Gastrocnemius medialis (tissue), 4 donors: ENCODE measurements at regions of chr2 and their contacts with region 1.

Region 1: GRCh38 chr2:26605195-26605998 is 35.8 kb downstream of the CIB4 start:
- DNase-seq: no peak
- ATAC-seq: peak; percentile 77 to 82
- H3K4me3 ChIP-seq: no peak overlapping the region
- H3K27ac ChIP-seq: no peak overlapping the region
- H3K4me1 ChIP-seq: no peaks in the 10 kb centered on the region
- H3K27me3 ChIP-seq: peaks cover 0 to 11% (median 11%) of the 10 kb centered on the region in 3 donors
- CTCF ChIP-seq: peak; percentile 76 to 86 (median 81)
- POLR2A ChIP-seq: no peak

Region 2: DNA sequence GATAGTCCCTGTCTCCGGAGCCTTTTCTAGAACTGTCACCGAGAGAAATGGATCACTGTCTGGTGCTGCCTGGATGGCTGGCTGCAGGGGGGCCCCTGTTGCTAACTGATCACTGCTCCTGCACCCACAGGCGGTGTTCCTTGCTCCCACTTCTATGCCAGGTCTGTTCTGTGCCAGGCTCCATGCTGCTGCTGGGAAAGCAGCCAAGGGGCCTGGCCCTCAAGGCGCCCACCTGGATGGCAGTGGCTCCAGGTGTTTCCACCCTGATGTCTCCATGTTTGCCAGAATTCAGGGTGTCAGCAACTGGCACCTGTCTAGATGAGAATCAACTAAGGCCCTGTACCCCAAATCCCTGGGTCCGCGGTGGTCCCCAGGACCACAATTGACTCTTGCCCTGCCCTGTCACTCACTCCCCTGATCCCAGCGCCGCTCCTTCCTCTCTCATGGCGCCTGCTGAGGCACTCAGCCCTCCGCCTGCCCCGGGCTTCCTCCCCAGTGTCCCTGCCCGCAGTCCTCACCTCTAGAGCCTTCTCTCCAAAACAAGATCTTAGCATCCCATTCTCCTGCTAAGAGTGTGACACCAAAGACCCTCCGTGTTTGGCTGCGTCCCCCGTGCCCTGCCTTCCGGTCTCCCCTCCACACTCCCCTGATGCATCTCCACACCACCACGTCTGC is 55.0 kb before region 1 on chr2:
- in situ Hi-C with region 1: no loop called
- intact Hi-C with region 1: no loop called
- DNase-seq: no peak
- ATAC-seq: no peak
- H3K4me3 ChIP-seq: no peak overlapping the region
- H3K27ac ChIP-seq: no peak overlapping the region
- H3K4me1 ChIP-seq: no peaks in the 10 kb centered on the region
- H3K27me3 ChIP-seq: no peaks in the 10 kb centered on the region
- CTCF ChIP-seq: no peak
- POLR2A ChIP-seq: no peak

Region 3: DNA sequence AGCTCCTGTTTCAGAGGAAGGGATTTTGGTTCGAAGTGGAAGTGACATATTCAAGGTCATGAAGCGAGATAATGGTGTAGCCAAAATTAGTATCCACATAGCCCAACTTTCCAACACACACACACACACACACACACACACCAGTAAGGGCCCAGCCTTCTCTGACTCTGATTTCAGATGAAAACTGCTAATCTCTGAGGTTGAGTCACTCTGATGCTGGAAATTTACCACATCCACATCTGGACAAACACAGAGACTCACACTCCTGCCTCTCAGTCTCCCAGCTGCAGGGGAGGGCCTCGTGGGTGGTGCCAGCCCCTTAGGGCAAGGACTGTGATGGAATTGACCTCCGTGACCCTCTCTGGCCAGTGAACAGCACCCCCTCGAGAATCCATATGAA is 129.7 kb after region 1 on chr2:
- in situ Hi-C with region 1: loop called in 2 of 4 experiments (anchors 5 kb)
- intact Hi-C with region 1: no loop called
- DNase-seq: no peak
- ATAC-seq: no peak
- H3K4me3 ChIP-seq: no peak overlapping the region
- H3K27ac ChIP-seq: no peak overlapping the region
- H3K4me1 ChIP-seq: no peaks in the 10 kb centered on the region
- H3K27me3 ChIP-seq: no peaks in the 10 kb centered on the region
- CTCF ChIP-seq: no peak
- POLR2A ChIP-seq: no peak

Region 4: DNA sequence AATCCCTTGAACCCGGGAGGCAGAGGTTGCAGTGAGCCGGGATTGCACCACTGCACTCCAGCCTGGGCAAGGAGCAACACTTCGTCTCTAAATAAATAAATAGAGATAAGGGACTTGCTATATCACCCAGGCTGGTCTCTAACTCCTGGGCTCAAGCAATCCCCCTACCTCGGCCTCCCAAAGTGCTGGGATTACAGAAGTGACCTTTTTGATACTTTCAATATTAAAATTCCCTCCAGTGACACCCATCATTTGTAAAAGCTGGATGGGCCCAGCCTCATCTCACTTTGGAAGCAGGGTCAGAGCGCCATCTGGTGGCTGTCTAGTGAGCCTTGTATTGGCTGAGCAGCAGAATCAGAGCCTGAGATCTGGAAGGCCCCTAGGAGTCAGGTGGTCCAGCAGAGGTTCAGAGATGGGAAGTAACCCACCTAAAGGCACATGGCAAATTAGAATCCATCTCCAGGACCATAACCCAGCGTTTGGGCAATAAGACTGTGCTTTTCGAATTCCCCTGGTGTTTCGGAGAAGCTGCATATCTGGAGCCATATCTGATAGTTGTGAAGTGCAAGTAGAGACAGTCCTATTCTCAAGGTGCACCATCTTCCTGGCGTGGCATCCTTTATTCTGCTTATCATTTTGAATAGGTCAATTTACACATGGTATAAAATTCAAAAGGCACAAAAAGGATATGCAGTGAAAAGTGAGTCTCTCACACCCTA is 140.4 kb after region 1 on chr2:
- in situ Hi-C with region 1: loop called in 3 of 4 experiments (anchors 5 kb)
- intact Hi-C with region 1: loop called (anchors 1 kb)
- DNase-seq: peak; percentile 50 to 69
- ATAC-seq: peak; percentile 81 to 85
- H3K4me3 ChIP-seq: no peak overlapping the region
- H3K27ac ChIP-seq: no peak overlapping the region
- H3K4me1 ChIP-seq: peaks cover 0 to 8% of the 10 kb centered on the region in 2 donors
- H3K27me3 ChIP-seq: no peaks in the 10 kb centered on the region
- CTCF ChIP-seq: peak; percentile 80 to 94 (median 91)
- POLR2A ChIP-seq: no peak